Dorsolateral prefrontal cortex (tissue), 120 donors: ENCODE measurements at regions of chr7 and their contacts with region 1.

Region 1: GRCh38 chr7:124101173-124101768 is 68.4 kb upstream of the TMEM229A start:
- DNase-seq: no peak
- H3K4me3 ChIP-seq: no peak overlapping the region
- H3K27ac ChIP-seq: no peak overlapping the region
- H3K27me3 ChIP-seq: no peaks in the 10 kb centered on the region
- CTCF ChIP-seq: peak in 55 of 56 donors; percentile 10 to 76 (median 62)

Region 2: GRCh38 chr7:123995617-123996326 is 105.5 kb before region 1 on chr7:
- intact Hi-C with region 1: loop called in 1 of 2 experiments (anchors 10 kb)
- DNase-seq: no peak
- H3K4me3 ChIP-seq: peak overlapping the region in 48 of 59 donors; percentile 8 to 62 (median 36)
- H3K27ac ChIP-seq: peak overlapping the region in 39 of 59 donors; percentile 3 to 93 (median 83)
- H3K27me3 ChIP-seq: peaks cover 0 to 13% (median 0%) of the 10 kb centered on the region in 45 donors
- CTCF ChIP-seq: no peak

Region 3: GRCh38 chr7:124032369-124033094 is 68.7 kb before region 1 on chr7 and contains the start of gene TMEM229A:
- intact Hi-C with region 1: loop called in 1 of 2 experiments (anchors 5 kb)
- DNase-seq: peak; percentile 37 to 75 (median 60)
- H3K4me3 ChIP-seq: peak within 1 kb of the TSS; percentile 61 to 93 (median 84)
- H3K27ac ChIP-seq: peak within 1 kb of the TSS; percentile 92 to 100 (median 98)
- H3K27me3 ChIP-seq: no peaks in the 10 kb centered on the region
- CTCF ChIP-seq: peak in 28 of 56 donors; percentile 3 to 52 (median 23)
- total RNA-seq, gene TMEM229A: 4.5 to 16.4 (median 9.0) TPM